ENCODE measurements at regions of chr9 and their contacts with region 1.

Region 1: DNA sequence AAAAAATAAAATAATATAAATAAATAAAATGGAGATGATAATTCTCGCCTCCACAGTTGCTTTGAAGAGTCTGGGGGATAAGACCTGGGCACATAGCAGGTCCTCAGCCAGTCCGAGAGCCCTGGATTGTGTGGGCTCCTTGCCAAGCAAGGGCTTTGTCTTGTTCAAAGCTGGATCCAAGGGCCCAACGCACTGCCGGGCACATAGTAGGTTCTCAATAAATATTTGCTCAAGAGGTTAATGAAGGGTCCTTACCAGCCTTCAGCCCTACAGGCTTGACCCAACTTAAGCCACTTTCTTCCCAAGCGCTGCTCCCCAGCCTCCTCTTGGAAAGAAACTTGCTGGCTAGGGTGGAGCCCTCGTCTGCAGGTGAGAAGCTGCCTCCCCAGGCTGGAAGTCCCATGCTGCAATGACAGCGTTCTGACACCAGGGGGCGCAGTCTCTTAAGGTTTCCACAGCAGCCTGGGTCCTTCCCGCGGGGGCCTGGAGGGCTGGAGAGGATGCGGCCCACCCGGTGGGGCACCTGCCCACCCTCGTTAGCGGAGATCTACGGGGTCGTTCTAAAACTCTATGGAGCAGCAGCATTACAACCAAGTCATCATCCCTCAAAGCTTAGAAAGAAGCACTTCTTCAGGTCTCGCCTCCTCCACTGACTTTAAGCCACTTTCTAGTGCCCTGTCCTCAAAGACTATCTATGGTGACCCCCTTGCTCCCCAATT is 115.2 kb downstream of the LHX2 start:
- DNase-seq: peak; percentile 80
- H3K4me3 ChIP-seq: no peak overlapping the region
- H3K27ac ChIP-seq: no peak overlapping the region
- H3K4me1 ChIP-seq: no peaks in the 10 kb centered on the region
- CTCF ChIP-seq: peak; percentile 97

Region 2: GRCh38 chr9:123544007-123544827 is 582.5 kb before region 1 on chr9:
- CTCF ChIA-PET with region 1: no interaction called
- POLR2A ChIA-PET with region 1: no interaction called
- intact Hi-C with region 1: loop called (anchors 10 kb)
- DNase-seq: peak; percentile 55
- H3K4me3 ChIP-seq: no peak overlapping the region
- H3K27ac ChIP-seq: no peak overlapping the region
- H3K4me1 ChIP-seq: no peaks in the 10 kb centered on the region
- CTCF ChIP-seq: peak; percentile 100

Region 3: GRCh38 chr9:124197177-124198095 is 70.7 kb after region 1 on chr9:
- CTCF ChIA-PET with region 1: interaction called, 3 read pairs
- POLR2A ChIA-PET with region 1: no interaction called
- intact Hi-C with region 1: loop called (anchors 1 kb)
- DNase-seq: peak; percentile 84
- H3K4me3 ChIP-seq: peak overlapping the region; percentile 9
- H3K27ac ChIP-seq: peak overlapping the region; percentile 34
- H3K4me1 ChIP-seq: peaks cover 54% of the 10 kb centered on the region
- CTCF ChIP-seq: peak; percentile 67

Region 4: GRCh38 chr9:124202447-124202971 is 75.8 kb after region 1 on chr9:
- CTCF ChIA-PET with region 1: no interaction called
- POLR2A ChIA-PET with region 1: no interaction called
- intact Hi-C with region 1: loop called (anchors 1 kb)
- DNase-seq: peak; percentile 95
- H3K4me3 ChIP-seq: peak overlapping the region; percentile 35
- H3K27ac ChIP-seq: peak overlapping the region; percentile 79
- H3K4me1 ChIP-seq: peaks cover 95% of the 10 kb centered on the region
- CTCF ChIP-seq: peak; percentile 57; the same call in 1 of the 2 replicates

Region 5: DNA sequence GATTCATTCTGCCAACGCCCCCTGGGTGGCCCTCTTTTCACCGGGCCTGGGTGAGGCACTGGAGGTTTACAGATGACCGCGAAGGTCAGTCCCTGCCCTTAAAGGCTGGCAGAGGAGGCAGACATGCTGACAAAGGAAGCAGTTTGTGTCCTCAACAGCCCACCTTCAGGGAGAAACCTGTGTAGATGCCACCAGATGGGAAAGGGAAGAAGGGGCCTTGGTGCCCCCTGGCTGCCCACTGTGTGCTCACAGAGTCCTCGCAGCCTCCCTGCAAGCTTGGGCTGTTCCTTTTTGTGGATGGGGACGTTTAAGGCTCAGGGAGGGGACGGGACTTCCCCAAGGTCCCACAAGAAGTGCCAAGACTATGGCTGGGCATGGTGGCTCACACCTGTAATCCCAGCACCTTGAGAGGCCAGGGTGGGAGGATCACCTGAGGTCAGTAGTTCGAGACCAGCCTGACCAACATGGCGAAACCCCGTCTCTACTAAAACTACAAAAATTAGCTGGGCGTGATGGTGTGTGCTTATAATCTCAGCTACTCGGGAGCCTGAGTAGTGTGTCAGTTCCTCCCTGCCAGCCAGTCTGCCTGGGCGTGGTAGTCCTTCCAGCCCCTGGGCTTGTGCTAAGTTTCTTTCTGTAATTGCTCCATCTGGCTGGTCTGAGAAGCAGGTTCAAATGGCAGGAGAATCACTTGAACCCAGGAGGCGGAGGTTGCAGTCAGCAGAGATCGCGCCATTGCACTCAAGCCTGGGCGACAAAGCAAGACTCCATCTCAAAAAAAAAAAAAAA is 167.2 kb after region 1 on chr9:
- CTCF ChIA-PET with region 1: no interaction called
- POLR2A ChIA-PET with region 1: no interaction called
- intact Hi-C with region 1: loop called (anchors 1 kb)
- DNase-seq: peak; percentile 60
- H3K4me3 ChIP-seq: no peak overlapping the region
- H3K27ac ChIP-seq: no peak overlapping the region
- H3K4me1 ChIP-seq: peaks cover 45% of the 10 kb centered on the region
- CTCF ChIP-seq: peak; percentile 69

Region 6: DNA sequence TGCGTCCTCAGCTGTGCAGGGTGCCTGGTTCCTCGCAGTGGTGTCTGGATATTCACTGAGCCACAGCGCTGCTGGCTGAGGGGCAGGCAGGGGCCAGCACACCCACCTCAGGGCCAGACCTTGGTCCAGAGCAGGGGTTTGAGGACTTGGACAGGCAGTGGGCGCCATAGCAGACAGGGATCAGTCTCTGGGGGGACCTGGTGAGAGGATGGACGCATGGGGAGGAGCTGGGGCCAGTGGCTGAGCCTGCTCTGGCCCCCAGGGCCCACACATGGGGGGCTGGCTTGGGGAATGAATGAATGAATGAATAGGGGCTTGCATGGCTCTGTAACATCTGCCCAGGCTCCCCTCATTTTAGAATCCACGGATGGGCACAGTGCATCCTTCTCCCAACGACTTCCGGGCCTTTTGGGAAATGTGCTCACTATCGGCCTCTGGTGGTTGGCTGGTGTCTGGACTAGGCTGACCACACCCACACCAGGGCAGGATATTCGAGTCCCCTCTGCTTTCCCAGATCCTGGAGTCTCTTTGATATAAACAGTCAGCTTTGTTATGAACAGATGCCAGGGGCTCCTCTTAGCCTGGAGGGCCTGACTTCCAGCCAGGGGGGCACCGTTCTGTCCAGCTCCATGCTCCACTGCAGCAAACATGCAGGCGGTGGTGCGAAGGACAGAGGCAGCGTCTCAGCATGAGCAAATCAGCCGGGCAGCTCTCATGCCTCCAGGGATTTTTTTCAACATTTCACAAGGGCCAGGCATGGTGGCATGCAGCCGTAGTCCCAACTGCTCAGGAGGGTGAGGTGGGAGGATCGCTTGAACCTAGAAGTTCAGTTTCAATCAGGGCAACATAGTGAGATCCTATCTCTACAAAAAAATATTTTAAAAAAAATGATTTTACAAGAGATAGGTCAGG is 193.6 kb after region 1 on chr9:
- CTCF ChIA-PET with region 1: no interaction called
- POLR2A ChIA-PET with region 1: no interaction called
- intact Hi-C with region 1: loop called (anchors 2 kb)
- DNase-seq: peak; percentile 70
- H3K4me3 ChIP-seq: no peak overlapping the region
- H3K27ac ChIP-seq: no peak overlapping the region
- H3K4me1 ChIP-seq: no peaks in the 10 kb centered on the region
- CTCF ChIP-seq: peak; percentile 91

Measured in OCI-LY7 (cell line).